ENCODE measurements at regions of chr1 and their contacts with region 1.

Region 1: GRCh38 chr1:45011837-45012638 is at the start of gene UROD:
- DNase-seq: peak; percentile 94
- CTCF ChIP-seq: no peak

Region 2: GRCh38 chr1:44849575-44850132 is 162.4 kb before region 1 on chr1:
- in situ Hi-C with region 1: loop called (anchors 10 kb)
- DNase-seq: no peak
- CTCF ChIP-seq: no peak

Region 3: GRCh38 chr1:45490626-45491486 is 478.8 kb after region 1 on chr1 and contains the start of gene TESK2:
- in situ Hi-C with region 1: loop called (anchors 10 kb)
- DNase-seq: peak; percentile 95
- CTCF ChIP-seq: no peak